Endothelial cell of umbilical vein (primary cell): ENCODE measurements at regions of chr17 and their contacts with region 1.

Region 1: GRCh38 chr17:28763804-28764266 is 20.0 kb downstream of the TRAF4 start:
- DNase-seq: peak; percentile 79
- H3K4me3 ChIP-seq: no peak overlapping the region
- H3K27ac ChIP-seq: no peak overlapping the region
- H3K4me1 ChIP-seq: peaks cover 16% of the 10 kb centered on the region
- H3K27me3 ChIP-seq: no peaks in the 10 kb centered on the region
- CTCF ChIP-seq: peak; percentile 66 to 75
- POLR2A ChIP-seq: no peak

Region 2: DNA sequence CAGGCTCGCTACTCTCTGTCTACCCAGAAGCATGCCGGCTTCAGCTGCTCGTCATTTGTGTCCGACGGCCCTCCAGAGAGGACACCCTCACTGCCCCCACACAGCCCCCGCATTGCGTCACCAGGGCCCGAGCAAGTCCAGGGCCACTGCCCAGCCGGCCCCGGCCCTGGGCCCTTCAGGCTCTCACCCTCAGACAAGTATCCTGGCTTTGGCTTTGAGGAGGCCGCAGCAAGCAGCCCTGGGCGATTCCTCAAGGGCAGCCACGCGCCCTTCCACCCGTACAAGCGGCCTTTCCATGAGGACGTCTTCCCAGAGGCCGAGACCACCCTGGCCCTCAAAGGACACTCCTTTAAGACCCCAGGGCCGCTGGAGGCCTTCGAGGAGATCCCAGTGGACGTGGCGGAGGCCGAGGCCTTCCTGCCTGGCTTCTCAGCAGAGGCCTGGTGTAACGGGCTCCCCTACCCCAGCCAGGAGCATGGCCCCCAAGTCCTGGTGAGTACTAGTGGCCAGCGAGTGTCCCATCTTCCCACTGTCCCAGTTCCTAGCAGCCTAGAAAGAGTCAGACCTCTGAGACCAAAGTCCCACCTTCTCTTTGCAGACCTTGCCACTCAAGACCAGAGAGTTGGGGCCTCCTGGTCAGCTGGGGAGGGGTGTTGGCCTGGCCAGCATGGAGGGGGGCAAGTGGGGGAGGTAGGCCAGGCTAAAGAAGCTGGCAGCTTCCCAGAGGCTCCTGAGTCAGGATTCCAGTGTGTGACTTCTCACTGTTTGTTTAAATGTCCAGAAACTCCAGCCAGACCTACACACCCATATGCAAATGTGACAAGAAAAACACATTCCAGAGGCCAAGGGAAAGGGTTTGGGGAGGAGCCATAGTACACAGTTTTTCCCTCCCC is 239.1 kb before region 1 on chr17:
- CTCF ChIA-PET with region 1: no interaction called
- POLR2A ChIA-PET with region 1: no interaction called
- dilution Hi-C with region 1: no loop called
- intact Hi-C with region 1: no loop called
- DNase-seq: no peak
- H3K4me3 ChIP-seq: no peak overlapping the region
- H3K27ac ChIP-seq: no peak overlapping the region
- H3K4me1 ChIP-seq: no peaks in the 10 kb centered on the region
- H3K27me3 ChIP-seq: no peaks in the 10 kb centered on the region
- CTCF ChIP-seq: no peak
- POLR2A ChIP-seq: no peak

Region 3: DNA sequence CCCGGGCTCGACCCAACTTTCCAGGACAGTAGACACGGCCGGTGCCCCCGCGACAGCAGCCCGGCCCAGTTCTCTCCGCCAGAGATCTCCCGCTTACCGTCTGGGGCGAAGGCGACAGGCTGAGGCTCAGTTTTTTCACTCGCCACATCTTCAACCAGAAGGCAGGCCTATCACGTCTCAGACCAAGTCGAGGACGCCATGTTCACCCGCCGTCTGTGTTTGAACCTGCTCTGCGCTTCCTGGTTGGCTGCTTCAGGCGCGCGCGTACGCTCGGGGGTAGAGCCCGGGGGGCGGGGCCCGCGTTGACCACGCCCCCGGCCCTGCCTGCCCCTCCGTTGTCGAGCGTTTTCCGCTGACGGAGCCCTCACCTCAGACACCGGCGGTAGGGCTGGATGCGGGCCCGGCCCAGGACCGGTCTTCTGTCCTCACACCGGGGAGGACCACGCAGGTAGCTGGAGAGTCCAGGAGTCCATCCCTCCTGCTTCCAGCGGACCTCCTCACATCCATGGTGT is 165.0 kb before region 1 on chr17 and contains the start of gene SPAG5:
- CTCF ChIA-PET with region 1: no interaction called
- POLR2A ChIA-PET with region 1: no interaction called
- dilution Hi-C with region 1: no loop called
- intact Hi-C with region 1: no loop called
- DNase-seq: peak; percentile 97
- H3K4me3 ChIP-seq: peak within 1 kb of the TSS; percentile 61 to 90 (median 68)
- H3K27ac ChIP-seq: peak within 1 kb of the TSS; percentile 95
- H3K4me1 ChIP-seq: peaks cover 18% of the 10 kb centered on the region
- H3K27me3 ChIP-seq: no peaks in the 10 kb centered on the region
- CTCF ChIP-seq: no peak
- POLR2A ChIP-seq: peak; percentile 77
- total RNA-seq, gene SPAG5: 85.4 and 90.6 TPM in 2 replicates

Region 4: DNA sequence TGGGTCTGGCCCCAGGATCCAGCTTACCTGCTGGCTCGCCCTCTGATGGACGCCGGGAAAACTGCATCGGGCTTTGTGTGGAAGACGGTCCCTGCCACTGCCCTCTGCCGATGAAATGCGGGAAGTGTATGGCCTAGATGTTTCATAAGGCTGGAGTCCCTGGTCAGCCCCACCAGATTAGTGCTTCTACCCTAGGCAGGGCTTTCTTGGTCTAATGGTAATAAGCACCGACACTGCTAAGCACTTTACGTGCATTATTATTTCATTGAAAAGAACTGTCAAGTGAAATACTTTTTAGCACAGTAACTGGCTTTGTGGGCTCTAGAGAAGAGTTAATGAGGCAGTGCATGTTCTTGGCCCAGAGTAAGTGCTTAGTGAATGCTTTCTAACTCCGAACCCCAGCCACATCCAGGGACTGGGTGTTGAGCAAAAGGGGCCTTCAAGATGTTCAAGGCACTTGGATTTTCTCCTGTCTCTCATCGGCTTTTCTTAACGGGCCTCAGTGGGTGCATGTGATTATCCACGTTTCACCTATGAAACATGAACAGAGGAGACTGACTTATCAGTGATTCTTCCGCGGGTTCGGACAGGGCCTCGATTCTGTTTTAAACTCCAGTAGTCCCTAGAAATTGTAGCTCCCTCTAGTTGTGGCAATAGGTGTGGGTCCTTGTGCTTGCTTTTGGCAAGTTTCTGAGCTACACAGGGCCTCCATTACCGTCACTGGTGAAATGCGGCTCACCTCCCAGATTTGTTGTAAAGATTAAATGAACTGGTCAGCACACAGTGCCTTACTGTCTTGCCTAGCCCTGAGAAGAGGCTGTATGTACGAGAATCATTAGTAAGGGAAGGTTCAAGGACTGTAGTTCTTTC is 13.4 kb before region 1 on chr17:
- CTCF ChIA-PET with region 1: interaction called, 46 read pairs
- POLR2A ChIA-PET with region 1: interaction called, 3 read pairs
- dilution Hi-C with region 1: no loop called
- intact Hi-C with region 1: no loop called
- DNase-seq: peak; percentile 91
- H3K4me3 ChIP-seq: no peak overlapping the region
- H3K27ac ChIP-seq: no peak overlapping the region
- H3K4me1 ChIP-seq: peaks cover 22% of the 10 kb centered on the region
- H3K27me3 ChIP-seq: no peaks in the 10 kb centered on the region
- CTCF ChIP-seq: peak; percentile 99 to 100
- POLR2A ChIP-seq: no peak

Region 5: DNA sequence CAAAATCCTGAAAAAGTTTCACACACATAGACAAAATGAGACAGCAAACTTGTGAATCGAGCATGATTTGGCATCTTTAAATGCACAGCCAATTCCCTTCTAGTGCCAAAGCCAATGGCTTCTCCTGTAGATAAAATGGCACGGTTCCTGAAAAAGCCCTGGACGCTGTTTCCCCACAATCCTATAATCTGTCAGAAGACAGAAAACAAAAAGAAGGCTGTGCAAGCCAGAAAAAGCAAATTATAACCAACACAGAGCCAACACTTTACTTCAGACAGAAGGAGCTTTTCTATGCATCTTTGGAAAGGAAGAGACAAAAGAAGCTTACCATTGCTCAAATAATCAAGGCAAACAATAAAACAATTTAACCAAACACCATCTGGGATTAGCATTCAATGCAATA is 55.0 kb after region 1 on chr17:
- CTCF ChIA-PET with region 1: interaction called, 20 read pairs
- POLR2A ChIA-PET with region 1: no interaction called
- dilution Hi-C with region 1: no loop called
- intact Hi-C with region 1: no loop called
- DNase-seq: no peak
- H3K4me3 ChIP-seq: no peak overlapping the region
- H3K27ac ChIP-seq: no peak overlapping the region
- H3K4me1 ChIP-seq: no peaks in the 10 kb centered on the region
- H3K27me3 ChIP-seq: no peaks in the 10 kb centered on the region
- CTCF ChIP-seq: no peak
- POLR2A ChIP-seq: no peak

Region 6: DNA sequence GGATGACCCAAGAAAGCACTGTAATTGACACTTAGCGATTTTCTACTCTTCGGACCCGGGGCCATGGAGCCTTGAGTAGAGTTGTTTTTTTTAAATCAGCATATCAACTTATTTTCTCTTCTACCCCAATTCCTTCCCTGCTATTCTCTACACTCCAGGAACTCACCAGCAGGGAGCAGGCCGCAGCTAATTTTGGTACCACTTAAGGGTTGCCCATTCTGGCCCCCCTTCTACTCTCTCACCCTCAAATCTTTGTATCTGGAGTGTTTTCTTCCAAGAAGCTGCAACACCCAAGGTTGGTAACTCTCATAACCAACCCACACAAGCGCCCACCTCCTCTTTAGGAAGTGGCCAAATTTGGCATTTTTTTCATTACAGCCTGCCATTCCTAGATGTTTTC is 85.4 kb after region 1 on chr17:
- CTCF ChIA-PET with region 1: interaction called, 130 read pairs
- POLR2A ChIA-PET with region 1: no interaction called
- dilution Hi-C with region 1: no loop called
- intact Hi-C with region 1: no loop called
- DNase-seq: peak; percentile 23
- H3K4me3 ChIP-seq: no peak overlapping the region
- H3K27ac ChIP-seq: no peak overlapping the region
- H3K4me1 ChIP-seq: peaks cover 2% of the 10 kb centered on the region
- H3K27me3 ChIP-seq: no peaks in the 10 kb centered on the region
- CTCF ChIP-seq: no peak
- POLR2A ChIP-seq: no peak

Region 7: DNA sequence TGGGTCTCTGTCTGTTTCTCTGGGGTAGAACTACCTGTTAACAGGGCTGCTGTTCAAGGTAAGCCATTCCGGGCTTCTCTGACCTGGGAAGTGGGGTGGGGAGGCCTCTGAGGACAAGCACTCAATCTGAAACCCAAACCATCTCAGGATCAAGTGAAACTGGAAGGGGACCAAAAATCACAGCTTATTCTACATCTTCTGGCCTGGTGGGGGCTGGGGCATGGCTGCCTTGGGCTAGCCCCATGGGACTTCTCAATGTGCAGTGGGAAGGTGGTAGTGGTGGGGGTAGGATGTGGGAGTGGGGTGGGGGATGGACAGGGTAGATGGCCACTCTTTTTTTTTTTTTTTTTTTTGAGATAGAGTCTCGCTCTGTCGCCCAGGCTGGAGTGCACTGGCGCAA is 128.2 kb after region 1 on chr17:
- CTCF ChIA-PET with region 1: interaction called, 46 read pairs
- POLR2A ChIA-PET with region 1: no interaction called
- dilution Hi-C with region 1: no loop called
- intact Hi-C with region 1: no loop called
- DNase-seq: no peak
- H3K4me3 ChIP-seq: no peak overlapping the region
- H3K27ac ChIP-seq: no peak overlapping the region
- H3K4me1 ChIP-seq: peaks cover 51% of the 10 kb centered on the region
- H3K27me3 ChIP-seq: no peaks in the 10 kb centered on the region
- CTCF ChIP-seq: no peak
- POLR2A ChIP-seq: no peak

Region 8: GRCh38 chr17:28916302-28916934 is 152.6 kb after region 1 on chr17:
- CTCF ChIA-PET with region 1: interaction called, 62 read pairs
- POLR2A ChIA-PET with region 1: no interaction called
- dilution Hi-C with region 1: no loop called
- intact Hi-C with region 1: loop called (anchors 1 kb)
- DNase-seq: peak; percentile 50
- H3K4me3 ChIP-seq: no peak overlapping the region
- H3K27ac ChIP-seq: no peak overlapping the region
- H3K4me1 ChIP-seq: peaks cover 13% of the 10 kb centered on the region
- H3K27me3 ChIP-seq: no peaks in the 10 kb centered on the region
- CTCF ChIP-seq: peak; percentile 46
- POLR2A ChIP-seq: no peak